Posterior cingulate gyrus (tissue), 11 donors: ENCODE measurements at regions of chr6 and their contacts with region 1.

Region 1: DNA sequence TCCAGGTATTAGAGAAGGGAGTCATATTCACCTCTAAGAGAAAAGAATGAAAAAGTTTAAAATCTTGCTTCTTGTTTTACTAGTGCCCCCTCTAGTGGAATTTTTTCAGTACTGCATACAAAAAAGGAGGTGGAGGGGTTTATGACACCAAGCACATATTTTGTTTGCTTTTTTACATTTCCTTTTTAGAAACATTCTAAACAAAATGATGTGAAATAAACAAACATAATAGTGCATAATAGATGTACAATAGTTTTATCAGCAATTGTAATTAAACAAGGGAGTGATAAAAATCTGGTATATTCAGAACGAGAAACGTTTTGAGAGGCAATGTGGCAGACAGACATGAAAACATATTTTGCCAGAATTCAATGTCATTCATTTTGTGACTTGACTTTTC is 111.0 kb upstream of the TFAP2D start:
- DNase-seq: no peak

Region 2: GRCh38 chr6:50264995-50265571 is 337.2 kb before region 1 on chr6:
- intact Hi-C with region 1: loop called (anchors 2 kb)
- DNase-seq: peak in 1 of 10 donors; percentile 20

Region 3: DNA sequence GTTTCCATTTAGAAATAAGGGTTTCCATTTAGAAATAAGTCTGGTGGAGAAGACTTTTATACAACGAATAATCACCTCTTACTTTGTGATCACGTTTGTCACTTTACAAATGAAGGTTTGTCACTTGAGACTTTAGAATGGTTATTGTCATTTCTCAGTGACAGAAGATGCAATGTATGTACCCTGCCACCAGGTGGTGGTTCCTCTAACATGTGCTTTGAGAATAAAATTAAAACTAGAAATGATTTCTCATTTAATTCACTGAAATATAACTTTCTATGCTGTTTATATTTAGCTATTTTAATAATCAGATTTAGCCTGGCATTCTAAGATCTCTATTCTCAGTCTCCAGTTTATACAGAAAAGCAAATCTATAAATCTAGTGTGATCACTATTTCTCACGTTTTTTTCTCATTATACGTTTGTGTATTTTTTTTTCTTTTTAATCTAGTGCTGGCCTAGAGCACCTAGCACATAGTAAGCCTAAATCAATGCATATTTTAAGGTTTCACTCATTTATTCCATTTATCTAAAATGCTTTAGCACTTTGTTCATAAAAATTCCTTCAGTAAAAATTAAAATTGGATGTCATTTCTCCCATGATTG is 53.7 kb after region 1 on chr6:
- intact Hi-C with region 1: no loop called
- DNase-seq: no peak

Region 4: DNA sequence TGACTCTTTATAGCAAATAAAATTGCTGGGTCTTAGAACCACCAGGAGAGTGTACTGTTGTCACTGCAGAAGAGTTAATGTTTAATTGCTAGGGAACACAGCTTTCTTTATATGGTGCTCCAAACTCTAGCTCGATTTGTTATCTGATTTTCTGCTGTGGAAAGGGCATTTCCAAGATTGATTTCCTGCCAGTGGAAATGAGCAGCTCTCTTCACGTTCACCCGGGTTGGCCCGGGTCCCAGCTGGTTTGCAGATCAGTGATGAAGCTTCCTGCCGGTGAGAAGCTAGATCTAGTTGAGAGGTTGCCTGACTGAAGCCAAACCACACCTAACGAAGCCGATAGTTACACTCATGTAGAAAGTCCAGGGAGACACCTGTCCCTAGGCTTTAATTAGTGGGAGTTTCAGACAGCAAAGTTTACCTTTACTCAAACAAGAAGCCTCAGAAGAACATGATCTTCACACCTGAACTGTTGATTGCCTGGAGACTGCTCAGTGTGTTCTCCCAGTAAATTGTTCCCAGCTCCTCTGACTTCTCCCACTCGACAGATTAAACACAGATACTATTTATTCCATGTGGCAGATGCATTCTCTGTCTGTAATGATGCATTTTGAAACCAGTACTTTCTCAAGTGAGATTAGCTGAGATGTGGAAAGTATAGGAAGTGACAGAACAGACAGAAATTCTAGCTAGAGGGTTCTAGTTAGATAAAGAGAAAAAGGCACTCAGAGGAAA is 1787.5 kb after region 1 on chr6:
- intact Hi-C with region 1: no loop called
- DNase-seq: peak in 6 of 10 donors; percentile 22 to 85 (median 52)